Activated CD4-positive, alpha-beta memory T cell treated with anti-CD3 and anti-CD28 coated beads, Interleukin-2, amount 10 ng/mL, durations not matched to agents 7 days and 5 days (primary cell): ENCODE measurements at regions of chr4 and their contacts with region 1.

Region 1: DNA sequence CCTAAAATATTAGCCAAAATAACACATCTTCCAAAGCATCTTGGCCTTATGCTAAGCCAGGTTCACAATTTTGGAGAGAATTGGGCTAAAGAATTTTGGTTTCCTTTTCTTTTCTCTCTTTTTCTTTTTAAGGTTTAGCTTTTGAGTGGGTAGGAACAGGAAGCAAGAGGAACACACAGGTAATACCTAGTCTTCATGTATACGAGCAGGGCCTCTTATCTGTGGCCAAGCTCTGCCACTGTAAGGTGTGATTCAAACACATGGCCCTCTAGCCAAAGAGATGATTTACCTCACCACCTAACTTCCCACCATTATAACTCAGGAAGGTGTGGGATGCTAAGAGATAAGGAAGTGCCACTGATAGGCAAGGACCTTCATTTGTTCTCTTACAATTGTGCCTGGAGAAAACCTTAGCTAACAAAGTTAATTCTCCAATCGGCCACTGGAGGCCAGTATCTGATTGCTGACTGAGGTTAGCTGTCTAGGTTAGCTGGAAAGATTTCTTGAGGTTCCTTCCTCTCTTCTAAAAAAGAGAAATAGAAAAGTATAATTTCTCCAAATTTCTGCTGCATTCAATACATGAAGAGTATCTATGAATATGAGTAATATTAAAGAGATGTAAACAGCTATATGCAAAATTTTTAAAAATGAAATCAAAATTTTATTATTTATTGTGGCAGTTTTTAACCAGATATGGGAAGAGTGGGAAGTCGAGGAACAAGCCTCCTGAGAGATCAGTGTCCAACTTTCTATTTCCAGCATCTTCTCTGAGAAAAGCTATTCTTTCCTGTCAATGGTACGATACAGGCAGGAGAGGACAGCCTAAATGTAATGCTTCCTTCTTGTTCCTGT is 30.1 kb upstream of the BBS7 start:
- DNase-seq: peak; percentile 56
- H3K4me3 Mint-ChIP-seq: no peak overlapping the region
- H3K27ac Mint-ChIP-seq: no peak overlapping the region
- H3K4me1 Mint-ChIP-seq: peaks cover 4% of the 10 kb centered on the region
- H3K27me3 Mint-ChIP-seq: no peaks in the 10 kb centered on the region

Region 2: GRCh38 chr4:121950212-121950679 is 49.9 kb after region 1 on chr4:
- CTCF ChIA-PET with region 1: interaction called, 14 read pairs
- POLR2A ChIA-PET with region 1: no interaction called
- DNase-seq: peak; percentile 85
- H3K4me3 Mint-ChIP-seq: peak overlapping the region; percentile 82
- H3K27ac Mint-ChIP-seq: no peak overlapping the region
- H3K4me1 Mint-ChIP-seq: peaks cover 15% of the 10 kb centered on the region
- H3K27me3 Mint-ChIP-seq: peaks cover 48% of the 10 kb centered on the region